Activated CD4-positive, alpha-beta memory T cell treated with anti-CD3 and anti-CD28 coated beads for 36 hours (primary cell): ENCODE measurements at regions of chr9 and their contacts with region 1.

Region 1: GRCh38 chr9:5869315-5870019 is 21.2 kb upstream of the MLANA start:
- DNase-seq: peak; percentile 62
- H3K4me3 Mint-ChIP-seq: no peak overlapping the region
- H3K27ac Mint-ChIP-seq: no peak overlapping the region
- H3K4me1 Mint-ChIP-seq: peaks cover 9% of the 10 kb centered on the region
- H3K27me3 Mint-ChIP-seq: no peaks in the 10 kb centered on the region

Region 2: DNA sequence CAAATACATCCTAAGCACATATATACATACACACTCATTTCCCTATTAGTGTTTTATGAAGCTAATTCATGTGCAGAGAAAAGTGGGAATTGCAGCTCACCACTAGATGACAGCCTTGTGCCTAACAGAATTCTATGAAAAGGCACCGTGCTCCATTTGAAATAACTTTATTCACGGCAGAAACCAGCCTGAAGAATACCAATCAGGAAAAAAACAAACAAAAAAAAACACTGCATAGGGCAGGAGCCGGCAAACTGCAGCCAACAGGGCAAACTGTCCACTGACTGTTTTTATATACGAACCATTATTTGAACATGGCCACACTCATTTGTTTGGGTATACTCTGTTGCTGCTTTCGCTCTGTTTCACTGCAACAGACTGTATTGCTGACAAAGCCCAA is 70.2 kb before region 1 on chr9:
- CTCF ChIA-PET with region 1: no interaction called
- POLR2A ChIA-PET with region 1: no interaction called
- intact Hi-C with region 1: loop called (anchors 2 kb)
- DNase-seq: no peak
- H3K4me3 Mint-ChIP-seq: no peak overlapping the region
- H3K27ac Mint-ChIP-seq: no peak overlapping the region
- H3K4me1 Mint-ChIP-seq: peaks cover 22% of the 10 kb centered on the region
- H3K27me3 Mint-ChIP-seq: no peaks in the 10 kb centered on the region

Region 3: GRCh38 chr9:5857928-5858327 is 11.5 kb before region 1 on chr9:
- CTCF ChIA-PET with region 1: interaction called, 10 read pairs
- POLR2A ChIA-PET with region 1: no interaction called
- intact Hi-C with region 1: loop called (anchors 2 kb)
- DNase-seq: no peak
- H3K4me3 Mint-ChIP-seq: no peak overlapping the region
- H3K27ac Mint-ChIP-seq: no peak overlapping the region
- H3K4me1 Mint-ChIP-seq: peaks cover 19% of the 10 kb centered on the region
- H3K27me3 Mint-ChIP-seq: no peaks in the 10 kb centered on the region